ENCODE measurements at regions of chr16 and their contacts with region 1.

Region 1: DNA sequence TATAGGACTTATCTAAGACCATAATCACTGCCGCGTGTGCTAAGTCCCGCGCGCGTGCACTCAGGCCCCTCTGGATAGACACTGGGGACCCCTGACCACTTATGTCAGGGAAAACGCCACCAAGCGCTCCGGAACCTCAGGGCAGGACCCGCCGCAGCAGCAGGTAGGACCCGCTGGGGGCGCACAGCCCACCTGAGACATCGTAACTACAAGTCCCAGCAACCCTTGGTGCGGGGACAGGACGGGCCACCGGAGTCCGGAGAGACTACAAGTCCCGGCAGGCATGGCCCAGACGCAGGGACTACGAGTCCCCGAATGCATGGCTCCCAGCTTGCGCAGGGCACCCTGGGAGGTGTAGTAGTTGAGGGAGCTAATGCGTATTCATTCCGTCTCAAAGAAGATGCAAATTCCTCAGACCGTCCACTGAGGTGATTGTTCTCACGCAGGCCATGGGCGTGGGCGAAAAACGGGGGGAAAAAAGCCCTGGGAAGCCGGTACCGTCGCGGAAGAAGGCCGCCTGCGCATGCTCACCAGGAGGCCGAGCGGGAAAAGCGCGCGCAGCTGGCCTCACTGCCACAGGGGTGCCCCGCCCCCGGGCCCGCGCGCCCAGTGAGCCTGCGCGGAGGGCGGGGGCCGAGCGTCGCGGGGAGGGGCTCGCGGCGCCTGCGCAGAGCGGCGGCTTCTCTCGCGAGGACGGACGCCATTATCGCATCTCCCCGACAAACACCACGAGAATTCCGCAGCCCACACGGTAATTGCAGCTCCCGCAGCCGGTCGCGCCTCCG is at the start of gene BANP:
- DNase-seq: peak; percentile 98
- ATAC-seq: peak; percentile 96
- H3K4me3 Mint-ChIP-seq: peak within 1 kb of the TSS; percentile 93
- H3K27ac Mint-ChIP-seq: peak within 1 kb of the TSS; percentile 100
- H3K4me1 Mint-ChIP-seq: peaks cover 47% of the 10 kb centered on the region
- H3K27me3 Mint-ChIP-seq: no peaks in the 10 kb centered on the region
- total RNA-seq, gene BANP: 35.2 to 36.1 TPM

Region 2: GRCh38 chr16:87492721-87493607 is 458.0 kb before region 1 on chr16 and contains the start of gene ZCCHC14:
- CTCF ChIA-PET with region 1: no interaction called
- POLR2A ChIA-PET with region 1: no interaction called
- intact Hi-C with region 1: loop called in 1 of 2 experiments (anchors 1 kb)
- DNase-seq: peak; percentile 100
- ATAC-seq: peak; percentile 94
- H3K4me3 Mint-ChIP-seq: peak within 1 kb of the TSS; percentile 83
- H3K27ac Mint-ChIP-seq: peak within 1 kb of the TSS; percentile 85
- H3K4me1 Mint-ChIP-seq: peaks cover 48% of the 10 kb centered on the region
- H3K27me3 Mint-ChIP-seq: no peaks in the 10 kb centered on the region
- total RNA-seq, gene ZCCHC14: 10.1 to 12.9 TPM

Region 3: DNA sequence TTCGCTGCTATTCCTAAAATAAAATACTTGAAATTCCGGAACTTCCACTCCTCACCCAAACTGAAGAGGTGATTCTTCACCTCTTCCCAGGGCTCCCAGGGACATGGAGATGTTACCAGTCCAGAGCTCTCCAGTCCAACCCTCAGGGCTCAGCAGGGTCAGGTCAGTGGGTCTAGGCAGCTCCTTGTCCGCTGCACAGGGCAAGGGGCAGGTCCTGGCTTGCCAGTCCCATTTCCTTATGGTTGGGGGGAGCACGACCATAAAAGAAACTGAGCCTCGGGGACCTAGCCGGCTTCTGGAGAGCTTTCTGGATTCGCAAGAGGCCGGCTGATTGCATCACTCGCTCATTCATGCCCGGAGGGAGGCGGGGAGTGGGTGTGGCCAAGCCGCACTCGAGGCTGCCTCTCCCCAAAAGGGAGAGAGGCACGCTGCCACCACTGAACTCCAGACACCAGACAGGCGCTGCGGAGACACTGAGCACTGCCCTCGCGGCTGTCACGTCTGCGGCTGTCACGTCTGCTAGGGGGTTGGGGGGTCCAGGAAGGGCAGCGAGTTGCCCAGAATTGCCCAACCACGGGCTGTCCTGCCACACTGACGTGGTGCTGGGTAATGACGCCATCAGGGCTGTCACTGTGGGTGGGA is 97.4 kb before region 1 on chr16:
- CTCF ChIA-PET with region 1: interaction called, 4 read pairs
- POLR2A ChIA-PET with region 1: no interaction called
- intact Hi-C with region 1: loop called in 1 of 2 experiments (anchors 1 kb)
- DNase-seq: peak; percentile 97
- ATAC-seq: peak; percentile 76
- H3K4me3 Mint-ChIP-seq: peak overlapping the region; percentile 55
- H3K27ac Mint-ChIP-seq: peak overlapping the region; percentile 92
- H3K4me1 Mint-ChIP-seq: peaks cover 61% of the 10 kb centered on the region
- H3K27me3 Mint-ChIP-seq: no peaks in the 10 kb centered on the region

Region 4: DNA sequence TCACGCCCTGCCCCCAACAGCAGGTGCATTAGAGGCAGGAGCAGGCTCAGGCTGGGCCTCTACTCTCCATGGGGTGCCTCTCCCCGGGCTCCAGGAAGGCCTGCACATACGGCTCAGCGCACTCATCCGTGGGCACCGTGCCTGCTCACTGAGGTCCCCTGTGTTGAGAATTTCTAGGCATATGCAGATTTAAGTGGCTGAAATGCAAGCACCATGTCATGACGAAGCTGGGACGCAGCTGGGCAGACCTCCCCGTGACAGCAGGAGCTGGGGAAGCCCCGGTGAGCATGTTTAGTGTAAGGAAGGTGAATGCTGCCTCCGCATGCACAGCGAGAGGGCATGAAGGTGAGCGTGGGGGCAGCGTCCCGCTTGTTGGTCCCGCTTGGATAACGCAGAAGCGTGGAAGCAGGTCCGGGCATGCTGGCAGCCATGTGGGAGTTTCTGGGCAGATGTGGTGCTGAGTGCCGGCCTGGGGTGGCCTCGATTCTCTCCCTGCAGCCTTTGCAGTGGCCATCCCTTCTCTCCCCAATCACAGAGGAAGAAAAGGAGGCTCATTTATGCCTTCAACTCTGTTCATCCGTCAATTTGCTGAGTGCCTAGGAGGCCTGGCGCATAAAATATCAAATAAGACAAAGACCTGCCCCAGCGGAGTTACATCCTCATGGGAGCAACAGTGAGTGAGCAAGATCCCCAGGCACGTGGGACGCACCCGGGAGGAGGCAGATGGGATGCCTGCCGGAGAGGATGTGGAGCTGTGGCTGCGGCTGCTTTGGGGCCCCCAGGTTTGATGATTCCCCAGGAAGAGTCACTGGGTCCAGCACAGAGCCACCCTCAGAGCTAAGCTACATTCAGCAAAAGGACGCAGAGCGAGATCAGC is 26.3 kb before region 1 on chr16:
- CTCF ChIA-PET with region 1: no interaction called
- POLR2A ChIA-PET with region 1: no interaction called
- intact Hi-C with region 1: no loop called
- DNase-seq: no peak
- ATAC-seq: no peak
- H3K4me3 Mint-ChIP-seq: no peak overlapping the region
- H3K27ac Mint-ChIP-seq: no peak overlapping the region
- H3K4me1 Mint-ChIP-seq: peaks cover 7% of the 10 kb centered on the region
- H3K27me3 Mint-ChIP-seq: no peaks in the 10 kb centered on the region

Region 5: GRCh38 chr16:87963400-87963799 is 12.4 kb after region 1 on chr16:
- CTCF ChIA-PET with region 1: interaction called, 5 read pairs
- POLR2A ChIA-PET with region 1: interaction called, 3 read pairs
- intact Hi-C with region 1: loop called (anchors 1 kb)
- DNase-seq: peak; percentile 90
- ATAC-seq: peak; percentile 97
- H3K4me3 Mint-ChIP-seq: peak overlapping the region; percentile 51
- H3K27ac Mint-ChIP-seq: peak overlapping the region; percentile 96
- H3K4me1 Mint-ChIP-seq: peaks cover 79% of the 10 kb centered on the region
- H3K27me3 Mint-ChIP-seq: no peaks in the 10 kb centered on the region

Region 6: GRCh38 chr16:88022076-88023062 is 71.4 kb after region 1 on chr16:
- CTCF ChIA-PET with region 1: no interaction called
- POLR2A ChIA-PET with region 1: no interaction called
- intact Hi-C with region 1: no loop called
- DNase-seq: no peak
- ATAC-seq: no peak
- H3K4me3 Mint-ChIP-seq: no peak overlapping the region
- H3K27ac Mint-ChIP-seq: no peak overlapping the region
- H3K4me1 Mint-ChIP-seq: peaks cover 14% of the 10 kb centered on the region
- H3K27me3 Mint-ChIP-seq: no peaks in the 10 kb centered on the region

Region 7: GRCh38 chr16:88533932-88534732 is 583.2 kb after region 1 on chr16:
- CTCF ChIA-PET with region 1: no interaction called
- POLR2A ChIA-PET with region 1: no interaction called
- intact Hi-C with region 1: loop called in 1 of 2 experiments (anchors 1 kb)
- DNase-seq: peak; percentile 89
- ATAC-seq: peak; percentile 78
- H3K4me3 Mint-ChIP-seq: peak overlapping the region; percentile 74
- H3K27ac Mint-ChIP-seq: no peak overlapping the region
- H3K4me1 Mint-ChIP-seq: peaks cover 7% of the 10 kb centered on the region
- H3K27me3 Mint-ChIP-seq: peaks cover 4% of the 10 kb centered on the region

Region 8: DNA sequence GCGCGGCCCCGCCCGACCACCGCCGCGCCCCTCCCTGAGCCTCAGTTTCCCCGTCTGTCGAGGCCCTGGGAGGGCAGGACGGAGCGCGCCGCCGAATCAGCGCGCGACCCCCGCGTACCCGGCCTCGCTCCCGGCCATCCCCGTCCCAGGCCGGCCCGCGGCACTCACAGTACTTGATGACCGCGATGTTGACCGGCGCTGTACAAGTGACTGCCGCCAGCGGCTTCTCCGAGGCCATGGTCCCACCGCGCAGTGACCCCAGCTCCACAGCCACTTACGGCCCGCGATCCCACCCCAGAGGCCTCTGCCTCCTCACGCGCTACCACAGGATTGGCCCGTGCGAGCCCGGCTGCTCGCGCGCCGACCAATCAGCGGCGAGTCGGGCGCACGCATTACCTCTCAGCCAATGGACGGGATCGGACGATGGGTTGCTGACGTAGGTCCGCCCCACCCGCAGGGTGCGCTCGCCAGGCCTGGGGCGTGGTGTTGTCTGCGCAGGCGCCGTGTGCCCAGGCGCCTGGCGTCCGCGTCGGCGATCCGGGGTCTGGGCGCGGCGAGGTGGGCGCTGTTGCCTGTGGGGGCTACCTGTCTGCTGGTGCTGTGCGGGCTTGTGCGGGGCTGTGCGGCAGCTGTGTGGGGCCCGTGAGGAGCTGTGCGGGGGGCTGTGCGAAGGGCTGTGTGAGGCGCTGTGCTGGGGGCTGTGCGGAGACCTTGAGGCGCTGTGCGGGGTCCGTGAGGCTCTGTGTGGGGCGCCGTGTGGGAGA is 712.1 kb after region 1 on chr16 and contains the start of gene MVD:
- CTCF ChIA-PET with region 1: no interaction called
- POLR2A ChIA-PET with region 1: no interaction called
- intact Hi-C with region 1: loop called in 1 of 2 experiments (anchors 1 kb)
- DNase-seq: peak; percentile 98
- ATAC-seq: peak; percentile 99
- H3K4me3 Mint-ChIP-seq: peak within 1 kb of the TSS; percentile 92
- H3K27ac Mint-ChIP-seq: peak within 1 kb of the TSS; percentile 88
- H3K4me1 Mint-ChIP-seq: peaks cover 14% of the 10 kb centered on the region
- H3K27me3 Mint-ChIP-seq: no peaks in the 10 kb centered on the region
- total RNA-seq, gene MVD: 62.8 to 81.1 TPM

Region 9: DNA sequence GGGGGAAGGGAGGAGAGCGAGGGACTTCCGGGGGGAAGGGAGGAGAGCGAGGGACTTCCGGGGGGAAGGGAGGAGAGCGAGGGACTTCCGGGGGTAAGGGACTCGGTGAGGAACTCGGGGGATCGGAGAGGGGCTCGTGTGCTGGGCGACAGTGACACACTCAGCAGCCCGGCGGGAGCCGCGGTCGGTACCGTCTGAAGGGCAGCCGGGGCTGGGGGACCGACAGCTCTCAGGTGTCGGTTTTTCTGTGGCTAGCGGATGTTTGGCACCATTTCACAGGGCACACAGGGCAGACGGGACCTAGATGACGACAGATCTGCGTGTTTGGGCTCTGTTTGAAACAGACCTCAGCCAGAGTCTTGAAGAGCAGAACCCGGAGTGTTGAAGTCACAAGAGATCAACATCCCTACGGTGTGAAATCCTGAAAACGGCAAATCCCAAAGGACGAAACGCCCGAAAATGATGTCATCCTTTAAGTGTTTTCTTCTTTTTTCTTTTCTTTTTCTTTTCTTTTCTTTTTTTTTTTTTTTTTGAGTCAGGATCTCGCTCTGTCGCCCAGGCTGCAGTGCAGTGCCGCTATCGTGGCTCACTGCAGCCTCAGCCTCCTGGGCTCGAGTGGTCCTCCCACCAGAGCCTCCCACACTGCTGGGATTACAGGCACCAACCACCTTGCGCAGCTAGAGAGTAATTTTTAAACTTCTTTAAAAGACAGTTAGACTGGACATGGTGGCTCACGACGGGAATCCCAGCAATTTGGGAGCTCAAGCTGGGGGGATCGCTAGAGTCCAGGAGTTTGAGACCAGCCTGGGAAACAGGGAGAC is 1290.4 kb after region 1 on chr16:
- CTCF ChIA-PET with region 1: no interaction called
- POLR2A ChIA-PET with region 1: no interaction called
- intact Hi-C with region 1: loop called in 1 of 2 experiments (anchors 10 kb)
- DNase-seq: peak; percentile 83
- ATAC-seq: peak; percentile 83
- H3K4me3 Mint-ChIP-seq: peak overlapping the region; percentile 87
- H3K27ac Mint-ChIP-seq: peak overlapping the region; percentile 100
- H3K4me1 Mint-ChIP-seq: peaks cover 14% of the 10 kb centered on the region
- H3K27me3 Mint-ChIP-seq: no peaks in the 10 kb centered on the region